Activated CD8-positive, alpha-beta T cell treated with anti-CD3 and anti-CD28 coated beads for 36 hours (primary cell): ENCODE measurements at regions of chr2 and their contacts with region 1.

Region 1: DNA sequence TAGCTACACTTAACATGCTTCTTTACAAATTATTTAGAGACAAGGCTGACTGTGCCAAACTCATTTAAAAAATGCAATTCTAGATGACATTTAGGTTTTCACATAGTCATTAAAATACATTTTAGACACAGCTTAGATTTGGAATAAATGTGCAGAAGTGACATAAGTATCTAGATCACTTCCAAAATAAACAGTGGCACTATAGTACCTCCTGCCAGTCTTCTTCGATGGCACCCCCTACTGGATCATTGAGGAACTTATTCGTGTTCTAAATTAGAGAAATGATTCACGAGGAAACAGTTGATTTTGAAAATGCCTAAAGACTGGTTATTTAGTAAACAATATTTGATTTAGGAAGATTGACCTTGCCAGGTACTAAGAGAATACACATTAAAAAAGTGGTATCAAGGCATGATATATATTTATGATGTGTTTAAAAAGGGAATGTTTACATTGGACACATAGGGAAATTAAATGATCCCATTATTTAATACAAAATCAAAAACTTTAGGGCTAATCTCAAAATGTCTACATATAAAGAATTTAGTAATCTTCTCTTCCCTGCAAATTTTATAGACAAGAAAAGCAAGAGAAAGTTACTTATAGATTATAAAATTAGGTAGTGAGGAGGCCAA is 323.9 kb downstream of the XIRP2 start:
- DNase-seq: peak; percentile 41
- ATAC-seq: peak; percentile 42
- H3K4me3 Mint-ChIP-seq: no peak overlapping the region
- H3K27ac Mint-ChIP-seq: no peak overlapping the region
- H3K4me1 Mint-ChIP-seq: no peaks in the 10 kb centered on the region
- H3K27me3 Mint-ChIP-seq: peaks cover 2% of the 10 kb centered on the region
- CTCF ChIP-seq: peak; percentile 65

Region 2: GRCh38 chr2:166539340-166540162 is 672.6 kb before region 1 on chr2:
- CTCF ChIA-PET with region 1: interaction called, 17 read pairs
- POLR2A ChIA-PET with region 1: no interaction called
- intact Hi-C with region 1: loop called (anchors 5 kb)
- DNase-seq: peak; percentile 18
- ATAC-seq: peak; percentile 74
- H3K4me3 Mint-ChIP-seq: no peak overlapping the region
- H3K27ac Mint-ChIP-seq: no peak overlapping the region
- H3K4me1 Mint-ChIP-seq: peaks cover 2% of the 10 kb centered on the region
- H3K27me3 Mint-ChIP-seq: no peaks in the 10 kb centered on the region
- CTCF ChIP-seq: peak; percentile 81

Region 3: DNA sequence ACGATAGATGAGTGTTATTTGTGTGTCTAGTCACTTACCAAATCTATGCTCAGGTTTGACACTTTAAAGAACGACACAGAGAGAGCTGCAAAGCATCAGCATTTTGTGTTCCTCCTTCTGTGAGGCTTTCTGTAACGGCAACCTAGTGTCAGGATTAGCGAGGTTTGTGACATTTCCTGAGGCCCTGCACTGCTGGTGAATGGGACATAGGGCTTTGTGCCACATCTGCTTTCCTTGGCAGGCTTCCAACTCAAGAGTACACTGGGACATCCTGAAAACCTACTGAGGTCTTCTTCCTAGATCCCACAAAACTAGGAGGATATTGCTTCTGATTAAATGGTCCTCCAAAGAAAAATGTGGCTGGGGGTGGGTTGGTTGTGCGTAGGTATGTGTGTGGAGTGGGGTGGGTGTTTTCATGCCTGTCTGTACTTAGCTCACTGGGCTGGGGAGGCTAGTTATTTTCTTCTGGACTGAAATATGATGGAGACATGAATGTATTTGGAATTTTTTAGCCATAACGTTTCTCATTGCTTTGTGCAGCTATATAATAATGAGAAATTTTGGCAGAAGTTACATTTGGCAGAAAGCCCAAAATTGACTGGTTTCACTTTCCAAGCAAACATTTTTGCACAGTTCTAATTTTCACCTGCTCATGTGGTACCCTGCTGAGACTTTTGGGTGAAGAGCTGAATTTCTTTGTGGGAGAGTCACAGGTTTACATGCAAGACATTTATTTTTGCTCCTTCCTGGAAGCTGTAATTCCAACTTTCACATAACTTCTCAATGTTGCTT is 15.5 kb before region 1 on chr2:
- CTCF ChIA-PET with region 1: no interaction called
- POLR2A ChIA-PET with region 1: no interaction called
- intact Hi-C with region 1: no loop called
- DNase-seq: no peak
- ATAC-seq: no peak
- H3K4me3 Mint-ChIP-seq: no peak overlapping the region
- H3K27ac Mint-ChIP-seq: no peak overlapping the region
- H3K4me1 Mint-ChIP-seq: peaks cover 4% of the 10 kb centered on the region
- H3K27me3 Mint-ChIP-seq: no peaks in the 10 kb centered on the region
- CTCF ChIP-seq: no peak